ENCODE measurements at regions of chr15 and their contacts with region 1.

Region 1: GRCh38 chr15:58749532-58750337 is at the start of gene ADAM10:
- DNase-seq: peak; percentile 99
- H3K4me3 Mint-ChIP-seq: peak within 1 kb of the TSS; percentile 96
- H3K27ac Mint-ChIP-seq: peak within 1 kb of the TSS; percentile 94
- H3K4me1 Mint-ChIP-seq: peaks cover 35% of the 10 kb centered on the region
- H3K27me3 Mint-ChIP-seq: no peaks in the 10 kb centered on the region
- total RNA-seq, gene ADAM10: 140 to 170 TPM

Region 2: GRCh38 chr15:58724466-58724865 is 25.3 kb before region 1 on chr15:
- CTCF ChIA-PET with region 1: no interaction called
- POLR2A ChIA-PET with region 1: no interaction called
- DNase-seq: no peak
- H3K4me3 Mint-ChIP-seq: no peak overlapping the region
- H3K27ac Mint-ChIP-seq: no peak overlapping the region
- H3K4me1 Mint-ChIP-seq: peaks cover 26% of the 10 kb centered on the region
- H3K27me3 Mint-ChIP-seq: no peaks in the 10 kb centered on the region

Region 3: GRCh38 chr15:58761010-58761388 is 11.3 kb after region 1 on chr15:
- CTCF ChIA-PET with region 1: interaction called, 11 read pairs
- POLR2A ChIA-PET with region 1: no interaction called
- DNase-seq: peak; percentile 33
- H3K4me3 Mint-ChIP-seq: no peak overlapping the region
- H3K27ac Mint-ChIP-seq: no peak overlapping the region
- H3K4me1 Mint-ChIP-seq: no peaks in the 10 kb centered on the region
- H3K27me3 Mint-ChIP-seq: peaks cover 9% of the 10 kb centered on the region

Region 4: GRCh38 chr15:59104912-59105732 is 355.4 kb after region 1 on chr15 and contains the start of gene CCNB2:
- CTCF ChIA-PET with region 1: no interaction called
- POLR2A ChIA-PET with region 1: no interaction called
- DNase-seq: peak; percentile 93
- H3K4me3 Mint-ChIP-seq: peak within 1 kb of the TSS; percentile 94
- H3K27ac Mint-ChIP-seq: peak within 1 kb of the TSS; percentile 99
- H3K4me1 Mint-ChIP-seq: peaks cover 35% of the 10 kb centered on the region
- H3K27me3 Mint-ChIP-seq: no peaks in the 10 kb centered on the region
- total RNA-seq, gene CCNB2: 94.1 to 107 TPM

Measured in activated CD4-positive, alpha-beta T cell treated with anti-CD3 and anti-CD28 coated beads, Interleukin-2, amount 10 ng/mL, durations not matched to agents 7 days and 5 days (primary cell).